Posterior vena cava (tissue), 2 donors: ENCODE measurements at regions of chr13 and their contacts with region 1.

Region 1: GRCh38 chr13:22278336-22278929 is 607.6 kb downstream of the FGF9 start:
- DNase-seq: no peak

Region 2: DNA sequence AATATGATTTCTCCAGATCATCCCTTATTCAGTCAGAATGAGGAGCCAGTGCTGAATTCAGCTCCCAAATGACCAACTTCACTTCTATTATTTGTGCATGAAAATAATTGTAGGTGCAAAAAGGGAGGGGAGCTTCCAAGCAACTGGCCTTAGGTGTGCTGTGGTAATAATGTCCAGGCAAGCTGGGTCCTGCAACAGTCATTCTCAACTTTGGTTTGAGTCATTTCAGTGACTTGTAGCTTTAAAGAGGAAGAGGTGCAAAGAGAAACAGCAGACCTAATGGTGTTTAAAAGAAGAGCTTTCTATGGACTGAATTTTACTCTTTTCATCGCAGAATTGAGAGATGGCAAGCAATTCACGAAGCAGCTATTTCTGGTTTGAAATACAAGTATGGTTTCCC is 636.8 kb before region 1 on chr13:
- intact Hi-C with region 1: loop called in 1 of 2 experiments (anchors 5 kb)
- DNase-seq: no peak

Region 3: DNA sequence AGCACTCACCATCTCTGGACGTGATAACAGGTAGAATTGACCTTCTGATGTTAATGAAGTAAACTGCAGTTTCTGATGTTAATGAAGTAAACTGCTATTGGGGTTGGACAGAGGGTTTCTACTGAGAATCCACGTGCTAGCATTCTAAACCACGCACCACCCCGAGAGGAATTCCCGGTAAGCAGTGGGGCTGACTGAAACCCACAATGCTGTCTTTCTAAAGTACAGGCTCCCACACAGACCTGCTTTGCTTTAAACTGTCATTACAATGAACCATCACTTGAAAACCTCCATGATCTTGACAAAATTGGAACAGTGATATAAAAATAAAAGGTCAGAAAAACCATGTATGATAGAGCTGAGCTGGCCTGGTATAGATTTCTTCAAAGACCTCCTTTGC is 48.5 kb before region 1 on chr13:
- intact Hi-C with region 1: loop called in 1 of 2 experiments (anchors 2 kb)
- DNase-seq: no peak